Ovary (tissue), 10 donors: ENCODE measurements at regions of chr13 and their contacts with region 1.

Region 1: DNA sequence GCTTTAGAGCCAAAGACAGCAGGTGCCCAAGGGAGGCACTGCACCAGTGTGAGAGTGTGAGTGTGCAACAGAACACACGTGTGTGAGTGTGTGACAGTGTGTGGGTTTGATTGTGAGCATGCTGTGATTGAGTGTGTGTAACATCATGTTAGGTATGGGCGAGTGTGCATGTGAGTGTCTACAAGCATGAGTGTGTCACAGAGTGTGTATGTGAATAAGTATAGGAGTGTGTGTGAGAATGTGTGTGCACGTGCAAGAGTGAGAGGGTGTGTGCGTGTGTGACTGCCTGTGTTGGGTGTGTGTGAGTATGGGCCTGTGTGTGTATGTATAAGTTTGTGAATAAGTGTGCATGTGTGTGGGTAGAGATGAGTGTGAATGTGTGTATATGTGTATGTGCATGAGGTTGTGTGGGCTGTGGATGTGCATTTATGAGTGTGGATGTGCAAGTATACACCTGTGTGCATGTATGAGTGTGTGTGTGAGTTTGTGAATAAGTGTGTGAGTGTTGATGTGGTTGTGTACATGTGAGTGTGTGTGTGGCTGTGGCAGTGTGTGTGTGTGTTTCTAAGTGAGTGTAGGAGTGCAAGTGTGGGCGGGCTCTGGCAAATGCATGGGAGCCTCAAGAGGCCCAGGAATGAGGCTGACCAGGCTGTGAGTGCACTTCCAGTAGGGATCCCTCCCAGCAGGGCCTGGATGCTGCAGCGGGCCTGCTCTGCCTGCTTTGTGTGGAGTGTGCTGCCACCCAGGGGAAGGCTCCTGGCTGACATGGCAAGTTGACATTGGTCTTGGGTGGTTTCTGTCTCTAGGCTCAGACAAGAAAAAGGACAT is 198.4 kb downstream of the COL4A1 start:
- DNase-seq: peak; percentile 58 to 80 (median 66)
- H3K4me3 ChIP-seq: no peak overlapping the region
- H3K27ac ChIP-seq: no peak overlapping the region
- H3K4me1 ChIP-seq: no peaks in the 10 kb centered on the region
- H3K27me3 ChIP-seq: no peaks in the 10 kb centered on the region
- CTCF ChIP-seq: peak; percentile 21 to 59 (median 44)
- EP300 ChIP-seq: no peak
- POLR2A ChIP-seq: no peak

Region 2: DNA sequence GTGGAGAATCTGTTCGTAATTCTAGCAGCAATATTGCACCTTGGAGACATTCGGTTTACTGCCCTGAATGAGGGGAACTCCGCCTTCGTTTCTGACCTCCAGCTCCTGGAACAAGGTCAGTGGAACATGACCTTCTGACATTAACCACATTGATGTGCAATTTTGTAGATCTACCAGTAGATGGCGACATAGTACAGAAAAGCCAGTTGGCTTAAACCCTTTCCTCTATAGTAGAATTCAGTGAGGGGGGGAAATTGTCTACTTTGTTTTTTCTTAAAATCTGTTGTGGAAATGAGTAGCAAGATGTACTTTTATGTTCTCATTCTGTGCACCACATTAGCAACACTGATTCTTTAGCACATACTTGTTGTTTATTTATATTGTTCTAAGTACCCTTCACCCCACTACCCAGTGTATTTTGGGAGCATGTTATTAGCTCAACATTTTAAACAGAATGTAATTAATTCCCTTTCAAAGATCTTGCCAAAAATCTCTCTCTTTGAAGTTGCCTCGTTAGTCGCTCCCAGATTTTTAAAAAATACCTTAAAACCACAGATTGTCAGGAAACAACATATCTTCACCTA is 1146.9 kb before region 1 on chr13:
- intact Hi-C with region 1: loop called in 3 of 4 experiments (anchors 5 to 10 kb)
- DNase-seq: no peak
- H3K4me3 ChIP-seq: no peak overlapping the region
- H3K27ac ChIP-seq: no peak overlapping the region
- H3K4me1 ChIP-seq: peaks cover 1% of the 10 kb centered on the region
- H3K27me3 ChIP-seq: no peaks in the 10 kb centered on the region
- CTCF ChIP-seq: peak; percentile 65 to 77 (median 71)
- EP300 ChIP-seq: no peak
- POLR2A ChIP-seq: no peak

Region 3: GRCh38 chr13:109145631-109146030 is 962.9 kb before region 1 on chr13:
- intact Hi-C with region 1: loop called in 2 of 4 experiments (anchors 5 to 10 kb)
- DNase-seq: peak in 3 of 5 donors; percentile 27 to 36 (median 35)
- H3K4me3 ChIP-seq: no peak overlapping the region
- H3K27ac ChIP-seq: no peak overlapping the region
- H3K4me1 ChIP-seq: peaks cover 2% of the 10 kb centered on the region
- H3K27me3 ChIP-seq: no peaks in the 10 kb centered on the region
- CTCF ChIP-seq: peak in 1 of 3 donors; percentile 74
- EP300 ChIP-seq: no peak
- POLR2A ChIP-seq: no peak

Region 4: DNA sequence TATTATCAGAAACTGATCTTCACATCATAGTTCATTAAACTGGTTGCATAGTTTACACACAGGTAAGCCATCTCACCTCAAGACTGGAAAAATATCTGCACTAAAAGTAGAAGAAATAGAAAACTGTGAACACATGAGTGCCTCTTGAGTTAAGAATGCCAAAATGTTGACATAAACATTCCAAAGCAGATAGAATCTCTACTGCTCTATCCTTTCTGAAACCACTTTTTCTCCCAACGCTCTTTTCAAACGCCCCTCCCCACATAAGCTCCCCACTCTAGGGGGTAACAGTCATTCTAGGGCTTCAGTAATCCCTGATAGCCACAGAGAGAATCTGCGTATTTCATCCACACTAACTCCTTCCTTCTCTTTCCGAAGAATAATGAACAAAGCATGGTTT is 523.7 kb before region 1 on chr13:
- intact Hi-C with region 1: no loop called
- DNase-seq: no peak
- H3K4me3 ChIP-seq: no peak overlapping the region
- H3K27ac ChIP-seq: no peak overlapping the region
- H3K4me1 ChIP-seq: no peaks in the 10 kb centered on the region
- H3K27me3 ChIP-seq: no peaks in the 10 kb centered on the region
- CTCF ChIP-seq: no peak
- EP300 ChIP-seq: no peak
- POLR2A ChIP-seq: no peak

Region 5: DNA sequence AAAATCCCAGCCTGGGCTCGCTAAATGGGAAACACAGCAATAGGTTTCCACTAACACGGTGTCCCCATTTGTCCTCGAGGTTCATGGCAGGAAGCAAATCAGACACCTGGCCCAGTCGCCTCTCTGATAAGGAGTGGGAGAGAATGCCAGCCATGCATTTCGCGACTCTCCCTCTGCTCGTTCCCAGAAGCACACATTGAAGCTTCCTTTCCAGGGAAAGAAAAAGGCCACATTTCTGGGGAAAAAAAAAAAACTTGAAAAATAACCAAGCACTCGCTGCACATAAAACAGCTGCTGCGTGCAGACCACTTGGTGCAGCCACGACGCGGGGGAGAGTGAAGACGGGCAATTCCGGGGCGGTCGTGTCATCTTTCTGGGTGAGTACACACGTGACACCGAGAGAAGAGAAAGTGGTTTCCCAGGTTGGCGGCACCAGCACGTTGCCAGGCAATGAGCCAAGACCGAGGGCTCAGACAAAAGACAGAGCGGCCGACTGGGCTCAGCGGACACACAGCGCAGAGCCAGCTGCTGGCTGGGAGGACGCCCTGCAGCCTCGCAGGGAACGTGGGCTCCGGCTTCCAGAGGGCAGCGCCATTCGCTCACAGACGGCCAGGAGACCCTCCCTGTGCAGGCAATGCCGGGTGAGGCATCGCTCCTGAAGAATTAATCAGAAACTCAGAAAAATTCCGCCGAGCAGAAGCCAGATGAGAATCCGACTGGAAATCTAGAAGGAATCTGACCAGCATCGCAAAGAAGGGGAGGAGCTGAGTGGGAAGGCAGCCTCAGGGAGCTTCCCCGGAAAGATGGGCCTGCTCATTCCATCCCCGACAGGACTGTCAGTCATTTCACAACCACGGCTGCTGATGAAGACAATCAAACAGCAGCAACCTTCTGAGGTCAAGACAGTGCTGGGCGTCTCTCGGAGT is 239.0 kb before region 1 on chr13:
- intact Hi-C with region 1: loop called in 1 of 4 experiments (anchors 10 kb)
- DNase-seq: peak; percentile 70 to 90 (median 86)
- H3K4me3 ChIP-seq: peak overlapping the region; percentile 35
- H3K27ac ChIP-seq: no peak overlapping the region
- H3K4me1 ChIP-seq: no peaks in the 10 kb centered on the region
- H3K27me3 ChIP-seq: no peaks in the 10 kb centered on the region
- CTCF ChIP-seq: peak in 2 of 3 donors; percentile 10 to 22
- EP300 ChIP-seq: no peak
- POLR2A ChIP-seq: no peak

Region 6: DNA sequence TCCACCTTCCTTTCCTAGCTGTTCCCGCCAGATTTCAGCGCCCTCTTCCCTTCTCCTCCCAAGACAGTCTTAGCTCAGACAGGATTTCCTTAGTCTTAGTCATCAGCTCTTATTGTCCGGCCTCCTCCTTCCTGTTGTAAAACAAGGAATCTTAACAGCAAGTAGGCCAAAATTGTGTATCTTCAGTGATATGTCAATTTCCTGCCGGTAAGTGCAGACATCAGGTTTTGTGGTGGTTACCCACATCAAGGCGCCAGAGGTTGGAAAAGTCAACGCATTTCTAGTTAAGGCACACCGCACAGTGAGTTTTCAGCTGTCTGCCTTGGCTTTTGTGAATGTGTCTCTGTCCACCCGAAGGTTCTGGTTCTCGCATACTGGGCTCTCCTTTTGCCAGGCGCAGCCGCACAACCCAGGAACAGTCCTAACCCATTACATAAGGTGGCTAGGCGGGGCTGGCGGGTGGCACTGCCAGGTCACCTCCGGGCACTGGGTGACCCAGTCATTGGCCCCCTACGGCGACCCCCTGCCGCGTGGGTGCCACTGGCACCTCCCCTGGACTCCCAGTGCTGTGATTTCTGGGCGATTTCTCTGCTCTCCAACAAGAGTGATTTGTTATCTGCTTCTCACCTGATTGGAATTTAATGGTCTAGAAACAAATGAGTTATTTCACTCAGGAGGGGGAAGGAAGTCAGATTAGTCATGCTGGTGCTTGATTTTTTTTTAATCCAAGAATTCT is 211.4 kb after region 1 on chr13:
- intact Hi-C with region 1: no loop called
- DNase-seq: no peak
- H3K4me3 ChIP-seq: no peak overlapping the region
- H3K27ac ChIP-seq: no peak overlapping the region
- H3K4me1 ChIP-seq: peaks cover 17% of the 10 kb centered on the region
- H3K27me3 ChIP-seq: no peaks in the 10 kb centered on the region
- CTCF ChIP-seq: no peak
- EP300 ChIP-seq: no peak
- POLR2A ChIP-seq: no peak

Region 7: GRCh38 chr13:110447058-110447511 is 338.5 kb after region 1 on chr13:
- intact Hi-C with region 1: no loop called
- DNase-seq: peak; percentile 52 to 69 (median 58)
- H3K4me3 ChIP-seq: no peak overlapping the region
- H3K27ac ChIP-seq: peak overlapping the region; percentile 9 to 50
- H3K4me1 ChIP-seq: peaks cover 4% of the 10 kb centered on the region
- H3K27me3 ChIP-seq: no peaks in the 10 kb centered on the region
- CTCF ChIP-seq: no peak
- EP300 ChIP-seq: no peak
- POLR2A ChIP-seq: no peak